ENCODE measurements at regions of chr2 and their contacts with region 1.

Region 1: DNA sequence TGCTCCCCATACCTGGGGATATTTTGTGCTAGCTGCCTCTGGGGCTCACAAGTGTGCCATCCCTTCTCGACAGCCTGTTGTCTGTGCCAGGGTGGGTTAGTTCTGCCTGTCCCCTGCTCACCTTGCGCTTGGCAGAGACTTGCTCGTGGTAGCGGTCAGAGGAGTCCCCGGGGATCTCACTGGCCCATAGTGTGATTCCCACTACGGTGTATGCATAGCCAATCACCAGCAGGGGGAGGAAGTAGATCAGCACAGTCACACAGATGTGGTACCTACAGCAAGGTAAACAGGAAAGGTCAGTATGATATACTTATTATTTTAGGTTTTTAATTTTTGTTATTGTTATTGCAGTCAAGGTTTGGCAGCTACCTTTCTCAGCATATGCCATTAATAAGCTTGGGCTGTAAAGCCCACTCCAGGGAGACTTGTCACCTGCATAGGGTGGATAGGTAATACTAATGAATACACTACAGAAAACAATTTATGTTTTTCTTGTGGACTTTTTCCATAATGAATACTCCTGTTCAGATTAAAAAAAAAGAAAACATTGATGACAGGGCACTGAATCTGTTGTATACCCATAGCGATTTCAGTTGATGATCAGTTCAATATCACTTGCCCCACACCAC is 95.2 kb downstream of the POLE4 start:
- DNase-seq: peak; percentile 58
- CTCF ChIP-seq: peak; percentile 72

Region 2: DNA sequence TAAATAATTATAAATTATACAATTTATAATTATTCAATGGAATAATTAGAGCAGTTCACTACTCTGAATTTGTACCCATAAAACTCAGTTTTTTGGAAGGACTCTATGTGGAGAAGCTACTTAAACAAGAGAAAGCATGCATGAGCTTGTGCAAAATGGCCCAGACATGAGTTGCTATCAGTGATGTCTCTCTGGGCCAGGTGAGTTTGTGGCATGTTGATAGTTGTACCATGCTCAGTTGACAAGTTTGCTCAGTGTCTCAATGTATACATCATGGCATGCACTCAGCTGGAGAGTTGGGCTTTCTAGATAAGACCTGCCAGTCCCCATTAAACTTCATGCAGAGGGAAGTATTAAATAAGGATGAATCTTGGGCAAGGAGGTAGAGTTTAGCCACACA is 299.5 kb after region 1 on chr2:
- in situ Hi-C with region 1: no loop called
- DNase-seq: no peak
- CTCF ChIP-seq: no peak

Region 3: DNA sequence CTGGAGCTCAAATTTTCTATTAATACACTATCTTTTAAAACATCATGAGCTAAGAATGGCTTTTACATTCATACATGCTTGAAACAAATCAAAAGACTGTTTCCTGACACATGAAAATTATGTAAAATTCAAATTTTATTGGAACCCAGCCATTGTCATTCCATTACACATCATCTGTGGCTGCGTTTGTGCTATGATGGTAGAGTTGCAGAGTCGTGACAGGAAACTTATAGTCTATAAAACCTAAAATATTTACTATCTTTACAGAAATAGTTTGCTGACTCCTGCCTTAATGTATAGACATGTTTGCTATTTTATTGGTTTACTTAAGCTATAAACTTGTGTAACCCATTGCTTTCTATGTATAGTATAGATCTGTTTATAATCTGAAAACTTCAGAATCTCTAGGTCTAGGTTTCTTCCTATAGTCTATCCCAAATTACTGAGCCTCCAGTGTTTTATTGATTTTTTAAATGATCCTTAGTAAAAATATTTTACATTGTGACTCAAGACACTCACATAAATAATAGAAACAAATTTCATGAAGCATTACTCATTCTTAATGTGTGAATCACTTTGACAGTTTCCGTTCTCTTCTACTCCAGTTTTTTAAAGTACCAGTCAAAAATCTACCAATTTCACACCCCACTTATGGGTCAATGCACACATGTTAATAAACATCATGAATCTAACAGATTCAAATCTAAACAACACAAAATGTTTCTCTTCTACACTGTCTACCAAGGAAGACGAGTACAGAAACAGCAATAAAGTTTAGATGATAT is 566.5 kb after region 1 on chr2:
- in situ Hi-C with region 1: loop called (anchors 10 kb)
- DNase-seq: no peak
- CTCF ChIP-seq: no peak